Right cardiac atrium (tissue), 5 donors: ENCODE measurements at regions of chr4 and their contacts with region 1.

Region 1: GRCh38 chr4:176340871-176341685 is 21.3 kb downstream of the SPCS3 start:
- DNase-seq: no peak
- ATAC-seq: peak; percentile 38 to 59
- H3K4me3 ChIP-seq: peak overlapping the region; percentile 21
- H3K27ac ChIP-seq: no peak overlapping the region
- H3K4me1 ChIP-seq: no peaks in the 10 kb centered on the region
- H3K27me3 ChIP-seq: no peaks in the 10 kb centered on the region

Region 2: GRCh38 chr4:175947117-175947722 is 393.9 kb before region 1 on chr4:
- intact Hi-C with region 1: loop called in 2 of 4 experiments (anchors 10 kb)
- DNase-seq: no peak
- ATAC-seq: no peak
- H3K4me3 ChIP-seq: no peak overlapping the region
- H3K27ac ChIP-seq: no peak overlapping the region
- H3K4me1 ChIP-seq: no peaks in the 10 kb centered on the region
- H3K27me3 ChIP-seq: no peaks in the 10 kb centered on the region

Region 3: DNA sequence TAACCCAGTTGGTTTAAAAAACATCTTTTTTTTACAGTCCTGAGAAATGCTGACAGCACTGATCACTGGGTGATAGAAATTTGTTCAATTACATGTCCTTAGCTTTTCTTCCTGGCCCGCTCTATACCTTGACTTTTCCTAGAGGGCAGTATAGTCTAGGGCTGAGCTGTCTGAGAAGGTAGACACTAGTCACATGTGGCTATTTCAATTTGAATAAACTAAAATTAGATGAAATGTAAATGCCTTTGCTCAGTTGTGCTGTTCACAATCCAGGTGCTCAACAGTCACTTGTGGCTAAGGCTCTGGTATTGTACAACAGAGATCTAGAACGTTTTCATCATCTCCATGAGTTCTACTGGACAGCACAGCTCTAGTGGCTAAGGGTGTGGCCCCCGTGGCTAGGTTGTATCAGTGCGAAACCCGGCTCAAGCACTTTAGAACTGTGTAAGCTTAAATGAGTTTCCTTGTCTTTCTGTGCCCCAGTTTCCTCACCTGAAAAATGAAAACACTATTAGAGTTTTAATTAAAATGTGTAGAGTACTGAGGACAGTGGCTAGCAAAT is 387.0 kb before region 1 on chr4:
- intact Hi-C with region 1: loop called in 2 of 4 experiments (anchors 10 kb)
- DNase-seq: no peak
- ATAC-seq: no peak
- H3K4me3 ChIP-seq: no peak overlapping the region
- H3K27ac ChIP-seq: no peak overlapping the region
- H3K4me1 ChIP-seq: no peaks in the 10 kb centered on the region
- H3K27me3 ChIP-seq: no peaks in the 10 kb centered on the region

Region 4: DNA sequence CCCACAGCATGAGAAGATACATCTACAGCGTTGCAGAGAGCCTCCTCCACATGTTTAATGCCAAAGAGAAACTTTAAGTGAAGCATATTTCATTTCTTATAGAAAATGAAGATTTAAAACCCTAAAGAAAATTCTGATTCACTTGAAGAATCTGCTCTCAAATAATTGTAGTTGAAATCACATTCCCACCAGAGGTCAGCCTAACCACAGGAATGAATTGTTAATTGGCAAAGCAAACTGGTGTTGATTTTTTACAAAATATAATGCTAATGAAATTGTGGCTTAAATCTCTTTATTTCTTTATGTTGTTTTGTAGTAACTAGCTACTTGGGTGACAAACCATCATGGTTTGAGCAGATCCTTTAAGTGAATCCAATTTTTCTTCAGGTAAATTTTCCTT is 306.6 kb before region 1 on chr4:
- intact Hi-C with region 1: loop called in 3 of 4 experiments (anchors 5 to 10 kb)
- DNase-seq: no peak
- ATAC-seq: no peak
- H3K4me3 ChIP-seq: no peak overlapping the region
- H3K27ac ChIP-seq: no peak overlapping the region
- H3K4me1 ChIP-seq: no peaks in the 10 kb centered on the region
- H3K27me3 ChIP-seq: no peaks in the 10 kb centered on the region

Region 5: DNA sequence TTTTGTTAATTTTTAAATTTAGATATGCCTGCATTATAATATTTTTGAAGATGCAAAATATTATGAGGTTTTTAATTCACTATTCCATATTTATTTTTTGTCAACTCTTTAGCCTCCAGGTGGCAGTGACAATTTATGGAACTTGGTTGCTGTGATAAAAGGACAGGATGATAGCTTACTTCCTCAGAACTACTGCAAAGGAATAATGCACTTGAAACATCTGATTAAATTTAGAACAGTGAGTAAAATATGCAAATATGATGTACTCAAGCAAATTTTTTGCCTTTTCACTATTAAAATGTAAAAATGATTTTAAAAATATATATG is 190.8 kb before region 1 on chr4:
- intact Hi-C with region 1: loop called (anchors 5 to 10 kb)
- DNase-seq: no peak
- ATAC-seq: no peak
- H3K4me3 ChIP-seq: no peak overlapping the region
- H3K27ac ChIP-seq: no peak overlapping the region
- H3K4me1 ChIP-seq: no peaks in the 10 kb centered on the region
- H3K27me3 ChIP-seq: no peaks in the 10 kb centered on the region

Region 6: GRCh38 chr4:176185067-176185466 is 156.0 kb before region 1 on chr4:
- intact Hi-C with region 1: no loop called
- DNase-seq: no peak
- ATAC-seq: peak in 1 of 2 donors; percentile 72
- H3K4me3 ChIP-seq: no peak overlapping the region
- H3K27ac ChIP-seq: no peak overlapping the region
- H3K4me1 ChIP-seq: no peaks in the 10 kb centered on the region
- H3K27me3 ChIP-seq: no peaks in the 10 kb centered on the region